Activated CD4-positive, alpha-beta memory T cell treated with anti-CD3 and anti-CD28 coated beads, Interleukin-2, amount 10 ng/mL, durations not matched to agents 7 days and 5 days (primary cell): ENCODE measurements at regions of chr11 and their contacts with region 1.

Region 1: GRCh38 chr11:83292709-83293456 is 6.7 kb upstream of the CCDC90B start:
- DNase-seq: no peak
- H3K4me3 Mint-ChIP-seq: no peak overlapping the region
- H3K27ac Mint-ChIP-seq: no peak overlapping the region
- H3K4me1 Mint-ChIP-seq: peaks cover 5% of the 10 kb centered on the region
- H3K27me3 Mint-ChIP-seq: peaks cover 16% of the 10 kb centered on the region

Region 2: DNA sequence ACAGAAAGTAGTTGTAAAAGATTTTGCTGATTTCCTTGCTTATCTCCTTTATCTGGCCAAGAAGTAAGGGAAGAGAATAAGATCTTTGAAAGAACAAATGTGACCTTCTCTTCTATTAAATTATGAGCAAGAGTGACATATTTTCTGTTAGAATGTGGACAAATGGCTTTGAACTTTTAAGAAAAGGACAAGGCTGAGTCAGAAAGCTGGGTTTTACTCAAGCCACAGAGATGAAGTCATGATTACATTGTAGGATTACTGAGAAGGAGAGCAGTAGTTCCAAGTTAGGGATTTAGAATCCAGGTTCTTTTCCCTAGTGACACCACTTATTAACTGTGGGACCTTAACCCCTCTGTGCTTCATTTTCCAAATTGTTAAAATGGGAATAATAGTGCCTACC is 20.3 kb before region 1 on chr11:
- CTCF ChIA-PET with region 1: interaction called, 11 read pairs
- POLR2A ChIA-PET with region 1: interaction called, 4 read pairs
- DNase-seq: no peak
- H3K4me3 Mint-ChIP-seq: no peak overlapping the region
- H3K27ac Mint-ChIP-seq: no peak overlapping the region
- H3K4me1 Mint-ChIP-seq: peaks cover 7% of the 10 kb centered on the region
- H3K27me3 Mint-ChIP-seq: no peaks in the 10 kb centered on the region

Region 3: DNA sequence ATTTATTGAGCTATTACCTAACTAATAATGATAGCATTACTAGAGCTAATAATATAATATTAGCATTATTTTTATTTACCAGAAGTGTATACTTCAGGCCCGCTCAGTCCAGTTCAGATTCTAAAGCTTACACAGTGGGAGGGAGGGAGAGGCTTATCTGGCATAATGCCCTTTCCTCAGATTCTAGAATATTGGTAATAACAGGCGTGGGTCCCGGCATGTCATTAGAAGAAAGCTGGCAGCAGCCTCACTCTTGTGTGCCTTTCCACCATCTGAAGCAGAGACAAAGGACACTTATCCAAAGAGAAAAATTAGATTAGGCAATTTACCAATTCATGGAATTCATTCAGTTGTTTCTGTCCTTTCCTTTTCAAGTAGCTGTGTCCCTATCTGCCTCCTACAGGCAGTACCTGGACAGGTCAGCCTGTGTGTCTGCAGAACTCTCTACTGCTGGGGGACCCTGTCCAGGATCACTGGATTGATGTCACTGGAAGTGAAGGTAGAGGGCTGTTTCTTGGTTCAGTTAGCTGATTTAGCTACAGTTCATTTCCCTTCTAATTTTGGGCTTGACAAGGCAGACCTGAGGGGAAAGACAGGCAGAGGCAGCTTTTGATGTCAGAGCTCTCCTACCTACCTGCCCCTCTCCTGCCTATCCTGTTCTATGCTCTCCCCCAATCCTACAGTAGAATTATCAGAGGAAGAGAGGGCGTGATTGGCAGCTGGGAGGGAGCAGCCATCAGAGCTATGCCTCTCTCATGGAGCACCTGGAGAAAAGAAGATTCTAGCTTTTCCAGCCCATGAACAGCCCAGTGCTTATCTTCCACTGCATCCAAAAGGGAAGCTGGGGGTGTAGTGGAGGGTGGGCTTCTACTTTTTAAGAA is 13.6 kb after region 1 on chr11:
- CTCF ChIA-PET with region 1: interaction called, 16 read pairs
- POLR2A ChIA-PET with region 1: no interaction called
- DNase-seq: no peak
- H3K4me3 Mint-ChIP-seq: no peak overlapping the region
- H3K27ac Mint-ChIP-seq: no peak overlapping the region
- H3K4me1 Mint-ChIP-seq: no peaks in the 10 kb centered on the region
- H3K27me3 Mint-ChIP-seq: peaks cover 7% of the 10 kb centered on the region

Region 4: GRCh38 chr11:83326311-83326710 is 33.4 kb after region 1 on chr11:
- CTCF ChIA-PET with region 1: no interaction called
- POLR2A ChIA-PET with region 1: no interaction called
- DNase-seq: no peak
- H3K4me3 Mint-ChIP-seq: no peak overlapping the region
- H3K27ac Mint-ChIP-seq: no peak overlapping the region
- H3K4me1 Mint-ChIP-seq: no peaks in the 10 kb centered on the region
- H3K27me3 Mint-ChIP-seq: peaks cover 16% of the 10 kb centered on the region

Region 5: DNA sequence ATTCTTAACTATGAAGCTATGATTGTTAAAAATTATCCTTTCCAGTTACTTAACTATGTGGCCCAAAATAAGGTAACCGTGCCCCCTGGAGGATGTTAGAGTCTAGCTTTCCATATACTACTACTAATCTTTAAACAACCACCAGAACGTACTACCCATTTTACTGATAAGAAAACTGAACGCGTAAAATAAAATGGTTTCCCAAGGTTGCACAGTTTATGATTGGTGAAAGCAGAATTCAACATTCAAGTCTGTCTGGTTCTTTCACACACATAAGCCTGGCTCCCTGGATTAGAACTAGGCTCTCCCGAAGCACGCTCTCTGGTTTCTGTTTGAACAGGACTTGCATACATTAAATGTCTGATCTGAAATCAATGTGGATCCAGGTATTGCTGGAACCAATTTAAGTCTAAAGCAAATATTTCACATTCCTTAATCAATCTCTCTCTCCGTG is 431.2 kb after region 1 on chr11:
- CTCF ChIA-PET with region 1: interaction called, 13 read pairs
- POLR2A ChIA-PET with region 1: no interaction called
- DNase-seq: no peak
- H3K4me3 Mint-ChIP-seq: peak overlapping the region; percentile 47
- H3K27ac Mint-ChIP-seq: no peak overlapping the region
- H3K4me1 Mint-ChIP-seq: peaks cover 2% of the 10 kb centered on the region
- H3K27me3 Mint-ChIP-seq: peaks cover 23% of the 10 kb centered on the region

Region 6: DNA sequence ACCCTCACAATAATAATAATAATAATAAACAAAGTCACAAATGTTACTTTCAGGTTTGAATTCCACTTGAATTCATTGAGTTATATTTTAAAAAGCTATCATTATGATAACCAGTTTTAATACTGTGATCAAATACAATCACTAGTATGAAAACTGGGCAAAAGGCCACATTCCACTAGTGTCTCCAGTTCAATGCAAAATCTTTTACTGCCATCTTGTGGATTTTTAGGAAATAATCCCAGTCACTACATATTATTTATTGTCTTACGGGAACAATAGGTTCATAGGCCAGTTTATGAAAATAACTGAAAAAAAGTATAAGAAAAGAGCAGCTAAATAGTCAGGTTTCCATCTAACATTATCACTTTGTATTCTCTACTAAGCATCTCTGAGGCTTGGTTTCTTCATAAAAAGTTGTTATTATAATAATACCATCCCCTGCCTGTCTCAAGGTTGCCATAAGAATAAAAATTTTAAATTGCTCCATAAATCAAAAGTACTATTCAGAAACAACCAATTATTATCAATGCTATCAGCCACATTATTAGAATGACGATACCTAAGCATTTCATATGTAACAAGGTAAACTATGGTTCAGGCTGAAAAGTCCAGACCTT is 527.2 kb after region 1 on chr11:
- CTCF ChIA-PET with region 1: interaction called, 16 read pairs
- POLR2A ChIA-PET with region 1: no interaction called
- DNase-seq: no peak
- H3K4me3 Mint-ChIP-seq: no peak overlapping the region
- H3K27ac Mint-ChIP-seq: no peak overlapping the region
- H3K4me1 Mint-ChIP-seq: no peaks in the 10 kb centered on the region
- H3K27me3 Mint-ChIP-seq: peaks cover 2% of the 10 kb centered on the region